Mammary epithelial cell (primary cell): ENCODE measurements at regions of chr18 and their contacts with region 1.

Region 1: DNA sequence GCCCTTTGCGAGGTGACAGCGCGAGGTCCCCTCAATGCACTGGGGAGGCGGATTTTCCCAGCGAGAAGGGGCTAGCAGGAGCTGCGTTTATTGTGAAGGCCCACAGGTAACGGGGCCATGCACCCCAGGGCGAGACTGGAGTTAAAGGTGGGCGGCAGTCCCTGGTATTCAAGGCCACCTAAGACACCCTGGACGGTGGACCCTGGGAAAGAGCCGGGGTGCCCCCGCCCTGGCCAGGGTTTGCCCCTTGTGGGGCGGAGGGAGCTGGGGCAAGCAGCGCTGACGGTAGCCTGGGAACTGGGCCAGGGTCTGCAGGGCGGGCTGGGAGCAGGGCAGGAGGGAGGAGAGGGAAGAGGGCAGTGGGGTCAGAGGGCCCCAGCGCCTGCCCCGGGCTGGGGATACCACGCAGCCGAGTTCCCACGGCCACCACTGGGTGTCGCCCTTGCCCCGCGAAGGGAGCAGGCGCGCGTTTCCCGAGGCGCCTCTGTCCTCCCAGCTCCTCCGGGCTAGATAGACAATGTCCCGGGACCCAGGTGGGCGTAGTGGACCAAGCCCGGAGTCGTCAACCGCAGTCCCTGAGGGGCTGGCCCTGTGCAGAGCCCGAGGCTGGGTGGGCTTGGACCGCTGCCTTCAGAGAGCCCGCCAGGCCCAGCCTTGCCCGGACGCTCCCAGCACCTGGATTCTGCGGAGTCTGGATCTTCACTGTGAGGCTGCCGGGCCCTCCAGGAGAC is 80.2 kb downstream of the SMAD4 start:
- DNase-seq: peak; percentile 25
- H3K4me3 ChIP-seq: peak overlapping the region in 2 of 3 experiments; percentile 40 to 46
- H3K27ac ChIP-seq: no peak overlapping the region
- H3K4me1 ChIP-seq: peaks cover 8% of the 10 kb centered on the region
- H3K27me3 ChIP-seq: no peaks in the 10 kb centered on the region
- CTCF ChIP-seq: peak; percentile 70 to 97

Region 2: DNA sequence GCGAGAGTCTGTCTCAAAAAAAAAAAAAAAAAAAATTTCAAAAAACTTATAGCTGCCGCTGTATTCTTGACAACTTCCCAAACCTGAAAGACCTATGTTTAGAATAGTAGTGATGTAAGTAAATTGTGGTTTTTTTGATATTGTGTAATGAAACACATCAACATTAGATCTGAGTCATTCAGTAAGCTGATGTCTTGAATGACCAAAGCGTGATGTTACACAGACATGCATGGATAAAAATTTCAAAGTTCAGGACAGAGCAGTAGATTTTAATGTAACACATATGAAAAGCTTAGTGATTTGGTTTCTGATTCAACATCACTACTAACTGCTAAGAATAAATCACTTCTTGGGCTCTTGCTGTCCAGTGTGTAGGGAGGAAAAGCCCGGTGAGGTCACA is 156.5 kb after region 1 on chr18:
- CTCF ChIA-PET with region 1: no interaction called
- dilution Hi-C with region 1: no loop called
- in situ Hi-C with region 1: no loop called
- intact Hi-C with region 1: loop called (anchors 2 kb)
- DNase-seq: peak; percentile 74
- H3K4me3 ChIP-seq: no peak overlapping the region
- H3K27ac ChIP-seq: peak overlapping the region; percentile 37
- H3K4me1 ChIP-seq: peaks cover 7% of the 10 kb centered on the region
- H3K27me3 ChIP-seq: no peaks in the 10 kb centered on the region
- CTCF ChIP-seq: no peak

Region 3: GRCh38 chr18:51383711-51384110 is 273.5 kb after region 1 on chr18:
- CTCF ChIA-PET with region 1: no interaction called
- dilution Hi-C with region 1: no loop called
- in situ Hi-C with region 1: no loop called
- intact Hi-C with region 1: loop called (anchors 1 kb)
- DNase-seq: no peak
- H3K4me3 ChIP-seq: no peak overlapping the region
- H3K27ac ChIP-seq: no peak overlapping the region
- H3K4me1 ChIP-seq: no peaks in the 10 kb centered on the region
- H3K27me3 ChIP-seq: no peaks in the 10 kb centered on the region
- CTCF ChIP-seq: no peak

Region 4: DNA sequence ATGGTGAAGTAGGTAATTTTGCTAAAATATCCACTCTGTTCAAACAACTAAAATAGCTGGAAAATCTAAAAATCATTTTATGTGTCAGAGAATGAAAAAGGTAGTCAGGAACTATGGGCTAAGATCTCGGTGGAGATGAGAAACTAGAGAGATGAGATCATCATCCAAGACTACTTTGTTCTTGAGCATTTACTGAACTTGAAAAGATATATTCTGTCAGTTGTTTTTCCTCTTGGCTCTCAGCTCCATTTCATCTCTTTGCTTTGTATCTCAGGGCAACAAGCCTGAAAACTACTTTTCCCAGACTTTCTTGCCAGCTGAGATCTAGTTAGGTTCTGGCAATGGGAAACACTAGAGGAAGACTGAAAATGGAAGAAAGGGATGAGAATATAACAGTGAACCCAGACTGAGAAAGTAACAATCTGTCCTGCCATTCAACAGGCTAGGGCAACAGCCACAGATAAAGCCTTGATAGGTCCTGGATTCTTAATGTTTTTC is 433.5 kb after region 1 on chr18:
- CTCF ChIA-PET with region 1: no interaction called
- dilution Hi-C with region 1: no loop called
- in situ Hi-C with region 1: loop called (anchors 5 to 10 kb)
- intact Hi-C with region 1: no loop called
- DNase-seq: no peak
- H3K4me3 ChIP-seq: no peak overlapping the region
- H3K27ac ChIP-seq: no peak overlapping the region
- H3K4me1 ChIP-seq: no peaks in the 10 kb centered on the region
- H3K27me3 ChIP-seq: no peaks in the 10 kb centered on the region
- CTCF ChIP-seq: no peak